HepG2 (cell line): ENCODE measurements at regions of chr16 and their contacts with region 1.

Region 1: GRCh38 chr16:73047518-73048291 is at the start of gene ZFHX3:
- DNase-seq: peak; percentile 76
- ATAC-seq: peak; percentile 63
- H3K4me3 ChIP-seq: peak within 1 kb of the TSS; percentile 69 to 93 (median 89)
- H3K27ac ChIP-seq: peak within 1 kb of the TSS; percentile 89
- H3K4me1 ChIP-seq: peaks cover 87% of the 10 kb centered on the region
- H3K27me3 ChIP-seq: no peaks in the 10 kb centered on the region; a peak in 2 of 5 replicates
- CTCF ChIP-seq: peak; percentile 59
- EP300 ChIP-seq: no peak
- POLR2A ChIP-seq: peak in 1 of 2 experiments; percentile 21; a peak in 2 of 4 replicates
- RAD21 ChIP-seq: peak; percentile 47
- total RNA-seq, gene ZFHX3: 6.0 and 12.3 TPM in 2 replicates

Region 2: GRCh38 chr16:72832621-72833248 is 215.0 kb before region 1 on chr16:
- CTCF ChIA-PET with region 1: no interaction called
- POLR2A ChIA-PET with region 1: no interaction called
- in situ Hi-C with region 1: no loop called
- intact Hi-C with region 1: loop called (anchors 10 kb)
- DNase-seq: peak; percentile 55
- ATAC-seq: peak; percentile 93
- H3K4me3 ChIP-seq: no peak overlapping the region
- H3K27ac ChIP-seq: no peak overlapping the region
- H3K4me1 ChIP-seq: no peaks in the 10 kb centered on the region
- H3K27me3 ChIP-seq: no peaks in the 10 kb centered on the region
- CTCF ChIP-seq: peak; percentile 95
- EP300 ChIP-seq: no peak
- POLR2A ChIP-seq: no peak
- RAD21 ChIP-seq: peak; percentile 93

Region 3: GRCh38 chr16:72927199-72928089 is 120.3 kb before region 1 on chr16:
- CTCF ChIA-PET with region 1: no interaction called
- POLR2A ChIA-PET with region 1: interaction called, 9 read pairs
- in situ Hi-C with region 1: no loop called
- intact Hi-C with region 1: loop called (anchors 1 kb)
- DNase-seq: peak; percentile 95
- ATAC-seq: peak; percentile 17; the same call in 2 of the 3 replicates
- H3K4me3 ChIP-seq: peak overlapping the region in 1 of 3 experiments; percentile 6; a peak in 1 of 6 replicates
- H3K27ac ChIP-seq: peak overlapping the region; percentile 96
- H3K4me1 ChIP-seq: peaks cover 99% of the 10 kb centered on the region
- H3K27me3 ChIP-seq: no peaks in the 10 kb centered on the region
- CTCF ChIP-seq: peak; percentile 40
- EP300 ChIP-seq: peak; percentile 78 to 97
- POLR2A ChIP-seq: no peak
- RAD21 ChIP-seq: peak; percentile 33; the same call in 1 of the 2 replicates

Region 4: DNA sequence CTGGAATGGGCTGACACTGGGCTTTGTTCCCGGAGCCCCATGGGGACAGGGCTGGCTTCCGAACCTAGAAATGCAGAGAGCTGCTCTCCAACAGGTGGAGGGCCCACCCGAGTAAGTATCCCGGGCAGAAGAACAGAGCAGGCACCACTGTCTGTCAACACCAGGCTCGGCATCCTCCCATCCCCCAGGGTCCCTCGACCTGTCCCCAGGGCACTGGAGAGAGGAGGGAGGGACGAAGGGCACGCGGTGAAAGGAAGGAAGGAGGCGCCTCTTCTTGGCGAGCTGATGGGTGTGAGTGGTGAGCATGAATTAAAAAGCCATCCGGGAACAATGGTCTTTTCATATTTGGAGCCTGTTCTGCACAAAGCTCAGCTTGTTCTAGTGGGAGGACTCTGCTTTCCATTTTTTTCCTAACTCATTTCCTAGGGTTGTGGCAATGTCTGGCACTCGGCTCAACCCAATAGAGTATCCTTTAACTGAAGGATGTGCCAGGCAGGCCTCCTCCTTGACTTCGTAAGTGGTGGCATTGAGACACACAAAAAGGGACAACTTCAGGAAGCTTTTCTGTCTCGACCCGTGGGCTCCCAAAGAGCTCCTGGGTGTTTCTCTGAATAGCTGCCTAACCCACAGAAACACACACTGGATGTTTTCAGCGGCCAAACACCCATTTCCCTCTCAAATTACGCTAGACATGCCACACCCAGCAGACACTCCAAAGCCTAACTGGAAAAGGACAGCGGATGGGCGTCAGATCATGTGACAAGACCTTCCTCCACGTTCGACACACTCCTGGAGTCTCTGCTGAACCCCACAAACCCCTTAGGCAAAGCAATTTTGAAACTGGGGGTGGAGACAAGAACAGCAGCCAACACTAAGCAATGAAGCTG is 47.4 kb before region 1 on chr16:
- CTCF ChIA-PET with region 1: no interaction called
- POLR2A ChIA-PET with region 1: interaction called, 3 read pairs
- in situ Hi-C with region 1: no loop called
- intact Hi-C with region 1: loop called (anchors 5 kb)
- DNase-seq: peak; percentile 91
- ATAC-seq: peak; percentile 86
- H3K4me3 ChIP-seq: peak overlapping the region; percentile 34 to 59 (median 35); a peak in 5 of 6 replicates
- H3K27ac ChIP-seq: peak overlapping the region; percentile 71
- H3K4me1 ChIP-seq: peaks cover 61% of the 10 kb centered on the region
- H3K27me3 ChIP-seq: no peaks in the 10 kb centered on the region
- CTCF ChIP-seq: peak; percentile 41
- EP300 ChIP-seq: peak in 1 of 2 experiments; percentile 55; a peak in 1 of 4 replicates
- POLR2A ChIP-seq: no peak
- RAD21 ChIP-seq: no peak

Region 5: DNA sequence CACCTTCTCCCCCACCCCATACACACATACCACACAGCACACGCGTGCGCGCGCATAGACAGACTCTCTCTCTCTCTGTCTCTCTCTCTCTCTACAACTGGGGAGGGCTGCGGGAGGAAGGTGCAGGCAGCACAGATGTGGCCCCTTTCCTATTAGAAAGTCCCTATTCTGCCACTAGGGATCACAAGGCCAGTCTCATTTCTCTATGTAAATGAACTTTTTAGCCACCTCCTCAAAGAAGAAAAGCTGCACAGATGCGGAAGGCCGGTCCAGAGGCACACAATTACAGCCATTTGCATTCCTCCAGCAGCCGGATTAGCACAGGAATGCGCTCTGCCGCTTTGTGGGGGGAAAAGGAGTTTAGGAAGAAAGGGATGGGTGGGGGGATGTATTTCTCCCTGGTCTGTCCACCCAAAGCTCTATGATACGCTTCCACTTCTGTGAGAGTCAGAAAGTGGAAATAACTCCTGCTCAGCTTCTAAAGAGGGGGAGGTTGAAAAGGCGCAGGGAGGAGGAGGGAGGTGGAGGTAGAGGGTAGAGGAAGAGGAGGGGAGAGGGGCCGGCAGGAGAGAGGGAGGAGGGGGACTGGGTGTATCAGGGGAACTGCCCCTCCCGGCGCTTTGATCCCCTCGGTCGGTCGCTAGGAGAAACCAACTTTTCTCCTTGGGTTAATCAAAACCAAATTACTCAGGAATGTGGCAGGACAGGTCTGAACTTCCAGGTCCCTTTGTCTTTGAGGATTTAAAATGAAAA is 11.5 kb before region 1 on chr16:
- CTCF ChIA-PET with region 1: no interaction called
- POLR2A ChIA-PET with region 1: interaction called, 49 read pairs
- in situ Hi-C with region 1: no loop called
- intact Hi-C with region 1: no loop called
- DNase-seq: no peak
- ATAC-seq: no peak
- H3K4me3 ChIP-seq: no peak overlapping the region
- H3K27ac ChIP-seq: peak overlapping the region; percentile 84
- H3K4me1 ChIP-seq: peaks cover 97% of the 10 kb centered on the region
- H3K27me3 ChIP-seq: no peaks in the 10 kb centered on the region
- CTCF ChIP-seq: no peak
- EP300 ChIP-seq: no peak
- POLR2A ChIP-seq: no peak
- RAD21 ChIP-seq: no peak

Region 6: GRCh38 chr16:73095885-73096421 is 48.2 kb after region 1 on chr16:
- CTCF ChIA-PET with region 1: no interaction called
- POLR2A ChIA-PET with region 1: no interaction called
- in situ Hi-C with region 1: no loop called
- intact Hi-C with region 1: no loop called
- DNase-seq: no peak
- ATAC-seq: no peak
- H3K4me3 ChIP-seq: no peak overlapping the region
- H3K27ac ChIP-seq: no peak overlapping the region
- H3K4me1 ChIP-seq: peaks cover 22% of the 10 kb centered on the region
- H3K27me3 ChIP-seq: peaks cover 2 to 4% of the 10 kb centered on the region in 2 experiments; a peak in 2 of 5 replicates
- CTCF ChIP-seq: no peak
- EP300 ChIP-seq: no peak
- POLR2A ChIP-seq: no peak
- RAD21 ChIP-seq: no peak

Region 7: DNA sequence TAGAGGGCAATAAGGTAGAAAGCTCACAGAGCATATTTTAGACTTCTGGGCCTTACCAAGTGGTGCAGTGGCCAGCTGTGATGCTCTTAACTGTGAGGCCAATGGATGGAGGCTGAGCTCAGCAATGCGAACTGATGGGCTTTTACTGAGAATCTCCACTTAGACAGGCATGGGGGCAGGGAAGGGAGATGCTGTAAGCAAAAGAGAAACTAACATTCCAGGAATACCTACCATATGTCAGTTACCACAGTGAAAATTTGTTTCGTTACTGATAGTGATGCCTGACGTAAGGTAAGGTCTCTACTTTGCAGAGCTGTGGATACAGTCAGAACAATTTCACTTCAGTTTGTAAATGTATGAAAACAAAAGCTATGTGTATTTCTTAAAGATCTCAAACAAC is 250.9 kb after region 1 on chr16:
- CTCF ChIA-PET with region 1: no interaction called
- POLR2A ChIA-PET with region 1: no interaction called
- in situ Hi-C with region 1: no loop called
- intact Hi-C with region 1: no loop called
- DNase-seq: peak; percentile 9
- ATAC-seq: no peak
- H3K4me3 ChIP-seq: no peak overlapping the region
- H3K27ac ChIP-seq: no peak overlapping the region
- H3K4me1 ChIP-seq: no peaks in the 10 kb centered on the region
- H3K27me3 ChIP-seq: peaks cover 0 to 48% of the 10 kb centered on the region in 2 experiments; a peak in 4 of 5 replicates
- CTCF ChIP-seq: no peak
- EP300 ChIP-seq: no peak
- POLR2A ChIP-seq: no peak
- RAD21 ChIP-seq: no peak

Region 8: GRCh38 chr16:73383195-73383987 is 335.7 kb after region 1 on chr16:
- CTCF ChIA-PET with region 1: no interaction called
- POLR2A ChIA-PET with region 1: no interaction called
- in situ Hi-C with region 1: no loop called
- intact Hi-C with region 1: no loop called
- DNase-seq: no peak
- ATAC-seq: no peak
- H3K4me3 ChIP-seq: no peak overlapping the region
- H3K27ac ChIP-seq: no peak overlapping the region
- H3K4me1 ChIP-seq: no peaks in the 10 kb centered on the region
- H3K27me3 ChIP-seq: peaks cover 2 to 42% of the 10 kb centered on the region in 2 experiments; a peak in 2 of 5 replicates
- CTCF ChIP-seq: no peak
- EP300 ChIP-seq: no peak
- POLR2A ChIP-seq: no peak
- RAD21 ChIP-seq: no peak

Region 9: DNA sequence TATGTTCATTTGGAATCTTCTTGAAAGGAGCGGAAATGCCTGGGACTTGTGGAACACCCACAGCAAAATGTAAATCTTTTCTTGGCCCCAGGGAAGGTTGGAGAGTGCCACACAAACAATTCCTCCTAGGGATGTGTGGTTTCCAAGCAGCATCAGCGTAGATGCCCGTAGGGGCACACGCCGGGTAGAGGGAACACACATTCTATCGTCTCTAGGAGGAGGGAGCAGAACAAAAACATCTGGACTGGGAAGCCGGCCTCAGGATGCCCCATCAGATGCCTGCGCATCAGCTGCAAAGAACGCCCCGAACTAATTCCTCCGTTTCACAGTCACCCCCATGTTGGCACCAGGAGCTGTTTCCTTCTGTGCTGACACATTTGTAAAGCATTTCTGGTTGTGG is 358.1 kb after region 1 on chr16:
- CTCF ChIA-PET with region 1: no interaction called
- POLR2A ChIA-PET with region 1: no interaction called
- in situ Hi-C with region 1: no loop called
- intact Hi-C with region 1: no loop called
- DNase-seq: no peak
- ATAC-seq: no peak
- H3K4me3 ChIP-seq: no peak overlapping the region
- H3K27ac ChIP-seq: no peak overlapping the region
- H3K4me1 ChIP-seq: no peaks in the 10 kb centered on the region
- H3K27me3 ChIP-seq: peaks cover 0 to 22% of the 10 kb centered on the region in 2 experiments; a peak in 2 of 5 replicates
- CTCF ChIP-seq: no peak
- EP300 ChIP-seq: no peak
- POLR2A ChIP-seq: no peak
- RAD21 ChIP-seq: no peak